ENCODE measurements at regions of chrX and their contacts with region 1.

Region 1: GRCh38 chrX:75114638-75115037 is 41.4 kb downstream of the ABCB7 start:
- DNase-seq: no peak
- H3K4me3 ChIP-seq: no peak overlapping the region
- H3K27ac ChIP-seq: no peak overlapping the region
- H3K4me1 ChIP-seq: no peaks in the 10 kb centered on the region
- H3K27me3 ChIP-seq: peaks cover 0 to 4% of the 10 kb centered on the region in 2 donors
- CTCF ChIP-seq: no peak
- POLR2A ChIP-seq: no peak

Region 2: DNA sequence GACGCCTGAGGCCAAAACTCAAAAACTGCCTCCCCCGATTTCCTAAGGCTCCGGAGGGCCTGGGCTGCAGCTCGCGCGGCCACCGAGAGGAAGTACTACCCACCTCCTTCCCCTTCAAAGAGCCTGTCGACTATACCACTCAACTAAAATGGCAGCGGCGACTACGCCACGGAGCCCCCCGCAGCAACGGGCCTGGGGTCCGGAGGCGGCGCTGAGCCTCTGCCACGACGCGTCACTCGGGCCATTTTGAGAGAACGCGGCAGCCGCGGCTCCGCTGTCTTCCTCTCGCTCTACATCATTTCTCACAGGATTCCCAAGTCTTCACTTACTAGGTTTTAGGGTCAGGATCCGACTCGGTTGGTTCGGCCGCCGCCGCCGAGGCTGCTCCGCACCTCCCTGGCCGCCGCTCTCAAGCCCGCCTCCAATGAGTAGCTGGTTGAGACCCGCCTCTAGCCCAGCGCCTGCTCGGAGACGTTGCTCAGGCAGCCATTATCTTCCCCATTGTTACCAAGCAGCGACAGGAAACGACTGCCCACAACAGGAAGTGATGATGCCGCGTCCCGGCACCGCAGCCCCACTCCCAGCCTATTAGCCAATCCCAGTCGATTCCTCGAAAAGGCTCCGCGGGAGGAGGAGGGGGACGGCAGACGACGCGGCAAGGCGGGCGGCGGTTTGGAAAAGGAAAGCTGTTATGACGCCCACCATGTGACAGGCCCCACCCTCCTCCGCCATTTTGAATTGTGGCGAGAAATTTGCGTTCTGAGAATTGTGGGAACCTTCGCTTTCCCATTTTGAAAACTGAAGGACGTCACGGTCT is 500.3 kb before region 1 on chrX and contains the start of gene RLIM:
- intact Hi-C with region 1: loop called (anchors 5 kb)
- DNase-seq: peak; percentile 91 to 95
- H3K4me3 ChIP-seq: peak within 1 kb of the TSS; percentile 74 to 78 (median 77)
- H3K27ac ChIP-seq: peak within 1 kb of the TSS; percentile 98 to 99
- H3K4me1 ChIP-seq: no peaks in the 10 kb centered on the region
- H3K27me3 ChIP-seq: peaks cover 0 to 5% of the 10 kb centered on the region in 2 donors
- CTCF ChIP-seq: no peak
- POLR2A ChIP-seq: peak; percentile 63
- total RNA-seq, gene RLIM: 32.1 to 45.1 (median 33.8) TPM

Region 3: DNA sequence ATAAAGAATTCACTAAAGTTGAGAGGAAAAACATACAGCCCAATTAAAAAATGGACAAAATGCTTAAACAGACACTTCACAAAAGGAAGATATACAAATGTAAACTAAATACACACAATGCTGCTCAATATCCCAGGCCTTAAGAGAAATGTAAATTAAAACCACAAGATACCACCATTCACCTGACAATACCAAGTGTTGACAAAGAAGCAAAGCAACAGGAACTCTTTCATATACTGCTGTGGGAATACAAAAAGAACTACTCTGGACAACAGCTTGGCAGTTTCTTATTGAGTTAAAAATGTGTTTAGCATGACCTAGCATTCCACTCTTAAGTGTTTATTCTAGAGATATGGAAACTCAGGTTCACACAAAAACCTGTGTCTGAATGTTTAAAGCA is 29.9 kb before region 1 on chrX:
- intact Hi-C with region 1: no loop called
- DNase-seq: no peak
- H3K4me3 ChIP-seq: no peak overlapping the region
- H3K27ac ChIP-seq: no peak overlapping the region
- H3K4me1 ChIP-seq: no peaks in the 10 kb centered on the region
- H3K27me3 ChIP-seq: peaks cover 0 to 1% of the 10 kb centered on the region in 2 donors
- CTCF ChIP-seq: no peak
- POLR2A ChIP-seq: no peak

Region 4: GRCh38 chrX:75131973-75132627 is 17.5 kb after region 1 on chrX:
- intact Hi-C with region 1: no loop called
- DNase-seq: no peak
- H3K4me3 ChIP-seq: no peak overlapping the region
- H3K27ac ChIP-seq: peak overlapping the region in 1 of 2 donors; percentile 49
- H3K4me1 ChIP-seq: no peaks in the 10 kb centered on the region
- H3K27me3 ChIP-seq: peaks cover 0 to 12% of the 10 kb centered on the region in 2 donors
- CTCF ChIP-seq: no peak
- POLR2A ChIP-seq: no peak

Measured in breast epithelium (tissue), 4 donors.